ENCODE measurements at regions of chr1 and their contacts with region 1.

Region 1: GRCh38 chr1:186375088-186375953 is at the starts of genes ODR4 and TPR:
- DNase-seq: peak; percentile 95 to 98
- ATAC-seq: peak; percentile 95 to 96
- H3K4me3 ChIP-seq: peak within 1 kb of the TSS; percentile 87 to 97 (median 89)
- H3K27ac ChIP-seq: peak within 1 kb of the TSS; percentile 97 to 98 (median 97)
- H3K4me1 ChIP-seq: peaks cover 24 to 27% of the 10 kb centered on the region in 2 donors
- H3K27me3 ChIP-seq: no peaks in the 10 kb centered on the region
- CTCF ChIP-seq: peak; percentile 79 to 94 (median 92)
- POLR2A ChIP-seq: peak; percentile 79 to 86
- total RNA-seq, gene ODR4: 11.3 to 16.8 (median 11.9) TPM
- total RNA-seq, gene TPR: 56.6 to 84.7 (median 62.9) TPM

Region 2: GRCh38 chr1:184743062-184743756 is 1632.1 kb before region 1 on chr1:
- in situ Hi-C with region 1: loop called in 1 of 4 experiments (anchors 25 kb)
- intact Hi-C with region 1: no loop called
- DNase-seq: no peak
- ATAC-seq: no peak
- H3K4me3 ChIP-seq: no peak overlapping the region
- H3K27ac ChIP-seq: no peak overlapping the region
- H3K4me1 ChIP-seq: peaks cover 3 to 24% of the 10 kb centered on the region in 2 donors
- H3K27me3 ChIP-seq: no peaks in the 10 kb centered on the region
- CTCF ChIP-seq: no peak
- POLR2A ChIP-seq: no peak

Region 3: DNA sequence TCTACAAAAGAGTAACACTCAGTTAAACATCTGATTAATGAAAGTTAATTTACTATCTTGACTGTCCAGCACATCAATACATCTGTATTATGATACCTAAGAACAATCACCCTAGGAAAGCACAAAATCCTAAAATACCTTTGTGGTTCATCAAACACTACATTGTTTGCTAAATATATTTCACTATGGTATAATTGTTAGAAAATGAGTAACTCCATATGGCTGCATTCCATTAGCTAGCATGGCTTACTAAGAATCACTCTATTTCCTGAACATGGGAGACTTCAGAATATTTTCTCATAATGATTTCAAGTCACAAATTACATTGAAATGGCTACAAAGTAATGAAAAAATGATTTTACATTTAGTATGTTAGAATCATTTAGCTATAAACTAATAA is 1231.1 kb before region 1 on chr1:
- in situ Hi-C with region 1: loop called in 1 of 4 experiments (anchors 25 kb)
- intact Hi-C with region 1: no loop called
- DNase-seq: no peak
- ATAC-seq: no peak
- H3K4me3 ChIP-seq: no peak overlapping the region
- H3K27ac ChIP-seq: no peak overlapping the region
- H3K4me1 ChIP-seq: no peaks in the 10 kb centered on the region
- H3K27me3 ChIP-seq: no peaks in the 10 kb centered on the region
- CTCF ChIP-seq: no peak
- POLR2A ChIP-seq: no peak

Region 4: GRCh38 chr1:185281245-185281644 is 1094.1 kb before region 1 on chr1:
- in situ Hi-C with region 1: loop called in 1 of 4 experiments (anchors 25 kb)
- intact Hi-C with region 1: no loop called
- DNase-seq: no peak
- ATAC-seq: no peak
- H3K4me3 ChIP-seq: no peak overlapping the region
- H3K27ac ChIP-seq: no peak overlapping the region
- H3K4me1 ChIP-seq: no peaks in the 10 kb centered on the region
- H3K27me3 ChIP-seq: no peaks in the 10 kb centered on the region
- CTCF ChIP-seq: no peak
- POLR2A ChIP-seq: no peak

Region 5: GRCh38 chr1:186420923-186421322 is 45.6 kb after region 1 on chr1:
- in situ Hi-C with region 1: no loop called
- intact Hi-C with region 1: no loop called
- DNase-seq: no peak
- ATAC-seq: no peak
- H3K4me3 ChIP-seq: no peak overlapping the region
- H3K27ac ChIP-seq: no peak overlapping the region
- H3K4me1 ChIP-seq: no peaks in the 10 kb centered on the region
- H3K27me3 ChIP-seq: no peaks in the 10 kb centered on the region
- CTCF ChIP-seq: no peak
- POLR2A ChIP-seq: no peak